ENCODE measurements at regions of chr5 and their contacts with region 1.

Region 1: DNA sequence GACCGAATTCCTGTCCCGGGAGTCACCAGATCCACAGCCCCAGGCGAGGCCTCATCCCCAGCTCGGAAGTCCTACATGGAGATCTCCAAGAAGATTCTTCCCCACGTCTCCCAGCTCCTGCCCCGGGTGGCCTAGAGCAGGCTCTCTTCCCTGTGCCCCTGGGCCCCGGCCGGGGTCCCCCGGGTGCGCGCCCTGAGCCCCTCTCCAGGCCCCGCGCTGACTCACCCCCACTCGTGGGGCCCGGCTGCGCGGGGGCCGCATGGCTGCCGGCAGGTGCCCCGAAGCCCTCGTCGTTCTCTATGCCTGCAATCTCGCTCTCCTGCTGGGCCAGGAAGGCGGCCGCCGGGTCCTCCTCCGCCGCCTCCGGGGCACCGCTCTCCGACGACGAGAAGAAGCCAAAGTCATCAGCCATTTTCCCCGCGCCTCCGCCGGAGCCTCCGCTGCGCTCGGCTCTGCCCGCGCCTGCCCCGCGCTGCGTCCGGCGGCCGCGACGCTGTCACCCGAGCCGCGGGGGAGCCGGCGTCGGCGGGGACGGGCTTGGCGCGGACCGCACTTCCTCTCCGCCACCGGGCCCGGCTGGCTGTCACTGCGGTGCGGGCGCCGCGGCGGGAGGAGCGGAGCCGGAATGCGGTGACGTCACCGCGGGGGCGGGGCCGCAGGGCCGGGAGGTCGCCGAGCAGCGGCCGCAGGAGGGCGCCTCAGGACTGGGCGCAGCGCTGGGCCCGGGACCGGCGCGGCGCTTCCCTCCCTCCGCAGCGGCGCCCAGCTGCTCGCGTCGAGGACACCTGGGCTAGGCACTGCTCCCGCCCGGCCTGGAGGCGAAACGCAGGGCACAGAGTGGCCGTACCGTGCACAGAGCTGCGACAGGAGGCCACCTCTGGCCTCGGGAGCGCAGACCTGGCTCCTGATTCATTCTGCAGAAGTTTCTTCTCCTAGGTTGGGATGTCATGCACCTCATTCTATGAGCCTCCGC is at the start of gene CLTB:
- DNase-seq: peak; percentile 84 to 97 (median 90)

Region 2: DNA sequence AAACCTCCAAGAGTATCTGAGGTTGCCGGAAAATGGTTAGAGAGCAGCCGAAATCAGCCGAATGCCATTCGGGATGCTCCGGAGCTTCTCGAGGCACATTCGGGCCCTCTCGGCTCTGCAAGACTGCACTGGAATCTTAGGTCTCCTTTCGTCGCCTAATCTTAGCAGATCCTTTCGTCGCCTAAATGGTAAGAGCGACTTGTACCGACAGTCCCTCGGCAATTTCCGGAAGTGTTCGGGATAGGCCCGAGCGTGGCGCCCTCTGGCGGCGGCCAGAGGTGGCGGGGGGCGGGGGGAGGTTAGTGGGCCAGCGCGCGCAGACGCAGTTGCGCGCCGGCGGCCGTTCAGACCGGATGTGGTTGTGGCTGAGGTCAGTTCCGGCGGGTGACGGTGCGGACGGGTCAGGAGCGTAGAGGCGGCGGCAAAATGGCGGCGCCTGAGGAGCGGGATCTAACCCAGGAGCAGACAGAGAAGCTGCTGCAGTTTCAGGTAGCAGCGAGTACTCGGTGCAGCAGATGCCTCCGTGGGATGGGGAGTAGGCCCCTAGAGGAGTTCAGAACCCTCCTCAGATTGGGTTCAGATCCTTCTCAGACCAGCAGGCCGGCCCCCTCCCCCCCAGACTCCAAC is 31.9 kb after region 1 on chr5 and contains the start of gene FAF2:
- intact Hi-C with region 1: loop called (anchors 1 kb)
- DNase-seq: peak; percentile 93 to 99 (median 95)

Region 3: GRCh38 chr5:176543428-176544173 is 127.4 kb after region 1 on chr5:
- intact Hi-C with region 1: loop called (anchors 1 kb)
- DNase-seq: peak in 9 of 10 donors; percentile 54 to 94 (median 63)

Region 4: DNA sequence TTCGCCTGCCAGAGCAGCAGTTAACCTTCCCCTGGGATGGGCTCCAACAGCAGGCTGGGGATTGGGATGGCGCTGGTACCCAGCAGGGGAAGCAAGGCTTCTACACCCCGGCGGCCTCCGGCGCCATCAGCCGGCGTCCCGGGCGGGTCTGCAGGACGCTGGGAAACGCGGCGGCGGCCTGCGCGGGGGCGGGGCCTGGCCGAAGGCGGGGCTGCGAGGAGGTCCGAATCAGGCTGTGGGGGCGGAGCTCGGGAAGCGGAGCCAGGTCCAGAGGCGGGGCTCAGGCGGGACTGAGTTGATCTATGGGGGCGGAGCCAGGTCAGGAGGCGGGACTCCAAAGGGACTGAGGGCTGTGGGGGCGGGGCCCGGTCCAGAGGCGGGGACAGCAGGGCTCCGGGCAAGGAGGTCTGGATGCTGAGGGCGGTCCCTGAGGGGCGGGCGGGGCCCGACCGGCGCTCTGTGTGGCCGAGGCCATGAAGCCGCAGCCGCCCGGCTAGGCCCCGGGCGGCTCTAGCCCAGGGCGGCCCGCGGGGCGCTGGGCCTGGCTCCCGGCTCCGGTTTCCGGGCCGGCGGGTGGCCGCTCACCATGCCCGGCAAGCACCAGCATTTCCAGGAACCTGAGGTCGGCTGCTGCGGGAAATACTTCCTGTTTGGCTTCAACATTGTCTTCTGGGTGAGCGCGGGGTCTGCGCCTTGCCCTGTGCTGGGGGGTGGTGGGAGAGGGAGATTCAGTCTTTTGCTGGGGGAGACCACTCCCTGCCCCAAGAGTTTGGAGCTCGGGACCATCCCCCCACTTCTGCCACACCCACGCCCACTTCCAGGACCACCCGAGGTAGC is 231.0 kb after region 1 on chr5 and contains the start of gene TSPAN17:
- intact Hi-C with region 1: loop called (anchors 1 kb)
- DNase-seq: peak; percentile 100

Region 5: GRCh38 chr5:176664886-176665285 is 248.6 kb after region 1 on chr5:
- intact Hi-C with region 1: no loop called
- DNase-seq: peak in 3 of 10 donors; percentile 22 to 67 (median 51)

Region 6: GRCh38 chr5:176762489-176762888 is 346.3 kb after region 1 on chr5:
- intact Hi-C with region 1: no loop called
- DNase-seq: peak in 1 of 10 donors; percentile 13

Measured in posterior cingulate gyrus (tissue), 11 donors.